MCF 10A (cell line): ENCODE measurements at regions of chr2 and their contacts with region 1.

Region 1: GRCh38 chr2:173124441-173124840 is 48.8 kb downstream of the MAP3K20 start:
- DNase-seq: peak; percentile 94
- H3K4me3 Mint-ChIP-seq: peak overlapping the region; percentile 43
- H3K27ac Mint-ChIP-seq: peak overlapping the region; percentile 89
- H3K4me1 Mint-ChIP-seq: peaks cover 58% of the 10 kb centered on the region
- H3K27me3 Mint-ChIP-seq: no peaks in the 10 kb centered on the region
- CTCF ChIP-seq: no peak

Region 2: GRCh38 chr2:173048897-173049661 is 75.4 kb before region 1 on chr2:
- CTCF ChIA-PET with region 1: no interaction called
- POLR2A ChIA-PET with region 1: interaction called, 22 read pairs
- intact Hi-C with region 1: no loop called
- DNase-seq: peak; percentile 98
- H3K4me3 Mint-ChIP-seq: peak overlapping the region; percentile 62
- H3K27ac Mint-ChIP-seq: peak overlapping the region; percentile 98
- H3K4me1 Mint-ChIP-seq: peaks cover 32% of the 10 kb centered on the region
- H3K27me3 Mint-ChIP-seq: no peaks in the 10 kb centered on the region
- CTCF ChIP-seq: no peak

Region 3: DNA sequence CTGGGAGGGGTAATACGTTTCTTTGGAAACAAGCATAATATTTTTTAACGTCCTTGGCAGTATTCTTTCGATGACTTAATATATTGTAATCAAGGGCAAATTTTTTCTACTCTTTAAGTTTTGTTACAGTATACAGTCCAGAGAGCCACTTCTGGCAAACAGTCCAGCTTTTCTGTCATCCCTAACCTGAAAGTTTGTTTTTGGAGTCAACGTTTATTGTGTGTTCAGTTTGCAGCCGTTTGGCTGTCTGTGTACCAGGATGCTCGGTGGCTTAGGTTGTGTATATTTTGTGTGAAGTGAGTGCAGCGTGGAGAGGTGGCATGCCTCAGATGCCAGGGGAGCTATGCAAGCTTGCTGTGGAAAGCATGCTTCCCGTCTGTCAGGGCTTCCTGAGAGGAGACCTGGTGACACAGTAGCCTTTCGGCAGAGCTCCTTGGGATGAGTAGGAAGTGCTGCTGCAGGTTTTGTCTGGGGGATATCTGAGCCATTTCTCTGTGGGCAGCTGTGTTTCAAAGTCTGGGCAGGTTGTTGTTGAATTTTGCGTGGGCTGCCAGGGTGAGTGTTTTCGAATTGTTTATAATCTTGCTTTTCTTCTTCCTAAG is 34.1 kb before region 1 on chr2:
- CTCF ChIA-PET with region 1: interaction called, 5 read pairs
- POLR2A ChIA-PET with region 1: interaction called, 20 read pairs
- intact Hi-C with region 1: no loop called
- DNase-seq: no peak
- H3K4me3 Mint-ChIP-seq: peak overlapping the region; percentile 24
- H3K27ac Mint-ChIP-seq: peak overlapping the region; percentile 65
- H3K4me1 Mint-ChIP-seq: peaks cover 18% of the 10 kb centered on the region
- H3K27me3 Mint-ChIP-seq: no peaks in the 10 kb centered on the region
- CTCF ChIP-seq: no peak

Region 4: GRCh38 chr2:173101687-173102086 is 22.8 kb before region 1 on chr2:
- CTCF ChIA-PET with region 1: interaction called, 3 read pairs
- POLR2A ChIA-PET with region 1: interaction called, 19 read pairs
- intact Hi-C with region 1: no loop called
- DNase-seq: peak; percentile 82
- H3K4me3 Mint-ChIP-seq: peak overlapping the region; percentile 14
- H3K27ac Mint-ChIP-seq: peak overlapping the region; percentile 85
- H3K4me1 Mint-ChIP-seq: peaks cover 29% of the 10 kb centered on the region
- H3K27me3 Mint-ChIP-seq: no peaks in the 10 kb centered on the region
- CTCF ChIP-seq: no peak

Region 5: DNA sequence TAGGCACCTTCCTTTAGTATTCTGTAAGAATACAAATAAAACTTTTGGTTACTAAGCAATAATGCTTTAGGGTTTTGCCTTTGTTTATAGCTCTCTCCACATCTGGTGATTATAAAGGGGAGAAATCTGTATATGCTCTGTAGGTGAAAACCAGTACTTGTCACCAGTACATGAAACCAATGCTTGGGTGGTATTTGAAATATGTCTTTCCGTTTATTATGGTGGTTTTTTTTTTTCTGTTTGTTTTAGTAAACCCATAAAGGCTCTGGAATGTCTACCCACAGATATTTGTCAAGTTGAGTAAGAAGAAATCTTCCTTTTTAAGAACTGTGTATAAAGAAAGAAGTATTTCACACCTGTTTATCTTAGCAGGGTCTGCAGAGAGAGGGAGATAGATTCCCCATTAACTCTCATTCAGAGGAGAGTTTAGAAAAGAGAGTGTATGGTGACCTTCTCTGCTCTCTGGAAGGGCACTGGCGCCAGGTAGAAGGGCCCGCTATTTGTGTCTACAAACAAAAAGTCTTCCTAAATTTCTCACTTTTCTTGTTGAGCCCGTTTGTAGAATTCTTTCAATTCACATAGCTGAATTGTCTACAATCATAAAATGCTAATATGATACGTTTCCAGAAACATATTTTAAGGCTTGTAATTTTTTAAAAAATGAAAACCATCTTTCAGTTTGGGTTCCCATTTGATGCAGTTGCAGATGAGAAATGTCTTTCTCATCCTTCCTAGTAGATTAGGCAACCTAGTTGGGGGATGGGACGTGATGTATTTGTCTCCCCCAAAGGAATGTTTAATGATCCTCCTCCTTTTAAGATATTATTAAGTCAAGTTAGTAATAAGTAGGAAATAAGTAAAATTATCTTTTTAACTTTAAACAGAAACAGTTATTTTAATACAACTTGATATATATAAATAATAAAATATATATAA is 14.9 kb before region 1 on chr2:
- CTCF ChIA-PET with region 1: interaction called, 6 read pairs
- POLR2A ChIA-PET with region 1: interaction called, 10 read pairs
- intact Hi-C with region 1: no loop called
- DNase-seq: no peak
- H3K4me3 Mint-ChIP-seq: peak overlapping the region; percentile 17
- H3K27ac Mint-ChIP-seq: peak overlapping the region; percentile 78
- H3K4me1 Mint-ChIP-seq: peaks cover 35% of the 10 kb centered on the region
- H3K27me3 Mint-ChIP-seq: no peaks in the 10 kb centered on the region
- CTCF ChIP-seq: no peak

Region 6: DNA sequence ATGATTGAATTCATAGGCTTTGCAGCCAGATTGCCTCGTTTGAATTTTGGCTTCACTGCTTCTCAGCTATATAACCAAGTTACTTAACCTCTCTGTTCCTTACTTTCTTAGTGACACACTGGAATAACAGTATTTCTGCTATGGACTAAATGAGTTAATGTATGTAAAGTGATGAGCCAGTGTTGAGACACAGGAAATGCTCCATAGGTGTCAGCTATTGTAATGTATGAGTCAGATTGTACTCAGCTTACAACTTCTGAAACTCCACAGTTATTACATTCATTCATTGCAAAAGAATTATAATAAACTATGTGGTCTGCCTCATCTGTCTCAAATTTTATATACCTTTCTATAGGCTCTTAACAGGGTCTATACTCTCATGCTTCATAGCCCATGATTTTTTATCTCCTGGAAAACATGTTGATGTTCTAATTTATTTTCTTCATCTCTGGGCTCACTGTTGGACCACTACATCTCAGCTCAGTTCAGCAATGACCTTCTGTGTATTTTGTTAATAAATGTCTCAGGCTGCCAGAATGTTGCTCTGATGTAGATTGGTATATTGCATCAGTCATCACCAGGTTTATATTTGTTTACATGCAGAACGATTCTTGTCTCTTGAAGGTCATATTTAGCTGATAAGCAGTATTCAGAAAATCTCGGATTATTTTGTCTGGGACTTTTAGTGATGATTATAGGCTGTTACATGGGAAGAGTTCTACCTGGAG is 27.4 kb after region 1 on chr2:
- CTCF ChIA-PET with region 1: interaction called, 4 read pairs
- POLR2A ChIA-PET with region 1: interaction called, 212 read pairs
- intact Hi-C with region 1: no loop called
- DNase-seq: peak; percentile 92
- H3K4me3 Mint-ChIP-seq: peak overlapping the region; percentile 24
- H3K27ac Mint-ChIP-seq: peak overlapping the region; percentile 91
- H3K4me1 Mint-ChIP-seq: peaks cover 56% of the 10 kb centered on the region
- H3K27me3 Mint-ChIP-seq: no peaks in the 10 kb centered on the region
- CTCF ChIP-seq: no peak

Region 7: DNA sequence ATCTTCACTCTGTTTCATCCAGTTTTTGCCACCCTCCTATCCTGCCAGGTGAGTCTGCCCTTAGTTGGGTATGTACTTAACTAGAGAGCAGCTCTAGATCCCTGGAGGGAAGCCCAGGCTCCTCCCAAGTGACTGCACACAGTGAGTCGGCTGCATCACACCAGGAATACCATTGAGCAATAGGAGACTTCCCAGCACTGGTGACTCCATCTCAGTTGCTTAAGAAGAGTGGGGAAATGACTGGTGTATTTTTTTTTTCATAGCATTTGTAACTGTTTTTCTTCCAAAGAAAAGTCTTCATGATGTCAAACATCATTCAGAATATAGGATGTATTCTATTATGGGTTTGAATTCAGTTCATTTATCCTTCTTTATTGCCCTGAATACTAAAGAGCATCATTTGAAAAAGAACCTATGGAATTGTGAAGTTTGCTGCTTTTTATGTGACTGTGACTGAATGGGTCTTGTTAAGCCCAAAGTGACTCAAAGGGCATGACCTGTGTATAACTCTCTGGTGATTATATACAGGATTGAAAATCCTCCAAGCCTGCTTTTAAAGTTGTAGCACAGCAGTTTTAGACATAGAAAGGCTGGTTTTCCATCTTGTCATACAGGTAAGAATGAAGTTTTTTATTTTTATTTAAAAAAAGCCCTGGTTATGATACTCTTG is 35.5 kb after region 1 on chr2:
- CTCF ChIA-PET with region 1: interaction called, 3 read pairs
- POLR2A ChIA-PET with region 1: interaction called, 17 read pairs
- intact Hi-C with region 1: no loop called
- DNase-seq: peak; percentile 100
- H3K4me3 Mint-ChIP-seq: peak overlapping the region; percentile 68
- H3K27ac Mint-ChIP-seq: peak overlapping the region; percentile 93
- H3K4me1 Mint-ChIP-seq: peaks cover 46% of the 10 kb centered on the region
- H3K27me3 Mint-ChIP-seq: no peaks in the 10 kb centered on the region
- CTCF ChIP-seq: no peak